H1 (cell line): ENCODE measurements at regions of chr2 and their contacts with region 1.

Region 1: DNA sequence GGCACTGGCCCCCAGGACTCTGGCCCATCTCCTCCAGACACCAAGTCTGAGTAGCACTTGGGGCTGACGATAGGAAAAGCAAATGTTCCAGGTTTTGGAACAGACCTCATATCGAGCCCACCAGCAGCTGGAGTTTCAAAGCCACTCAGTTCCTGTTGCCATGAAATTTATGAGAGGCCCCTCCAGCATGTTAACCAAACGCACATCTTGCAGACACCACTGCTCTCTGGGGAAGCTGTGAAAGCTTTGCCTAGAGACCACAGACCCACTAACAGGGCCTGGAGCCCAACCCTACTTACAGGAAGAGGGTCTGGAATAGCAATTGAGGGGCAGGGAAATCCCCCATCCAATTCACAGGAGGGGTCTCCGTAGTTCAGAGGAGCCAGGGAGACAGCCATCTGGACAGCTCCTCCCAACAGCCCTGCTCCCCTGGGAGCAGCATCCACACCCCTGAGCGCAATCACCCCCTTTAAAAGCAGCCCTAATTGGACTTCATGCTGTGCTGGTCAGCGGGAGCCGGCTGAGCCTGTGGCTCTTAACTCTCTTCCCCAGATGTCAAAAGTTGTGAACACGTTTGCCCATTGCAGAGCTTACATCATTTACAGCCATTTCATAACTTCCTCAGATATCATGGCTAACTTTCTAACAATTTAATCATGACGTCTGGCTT is 81.3 kb downstream of the TGFA start:
- DNase-seq: no peak
- H3K4me3 ChIP-seq: no peak overlapping the region
- H3K27ac ChIP-seq: no peak overlapping the region
- H3K4me1 ChIP-seq: peaks cover 0 to 4% (median 0%) of the 10 kb centered on the region in 4 experiments; a peak in 2 of 7 replicates
- H3K27me3 ChIP-seq: peaks cover 0 to 3% (median 0%) of the 10 kb centered on the region in 4 experiments; a peak in 1 of 7 replicates
- CTCF ChIP-seq: no peak
- EP300 ChIP-seq: no peak
- POLR2A ChIP-seq: no peak
- RAD21 ChIP-seq: no peak

Region 2: DNA sequence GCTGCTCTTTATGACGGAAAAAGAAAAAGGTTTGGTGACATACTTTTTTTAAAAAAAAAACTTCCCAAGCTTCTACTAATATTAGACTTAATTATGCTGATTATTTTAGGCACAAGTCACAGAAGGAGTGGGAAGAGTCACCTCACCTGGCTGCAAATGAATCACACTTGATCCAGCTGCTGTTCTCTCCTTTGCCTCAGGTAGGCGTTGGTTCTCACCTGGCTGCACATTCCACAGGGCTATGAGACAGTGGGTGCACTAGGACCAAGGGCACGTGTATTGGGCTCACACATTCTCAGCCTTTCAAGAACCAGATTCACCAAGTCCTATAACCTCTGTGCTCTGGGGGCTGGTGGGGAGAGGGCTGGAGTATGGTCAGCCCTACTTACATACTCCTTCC is 12.0 kb before region 1 on chr2:
- CTCF ChIA-PET with region 1: interaction called, 21 read pairs
- POLR2A ChIA-PET with region 1: no interaction called
- DNase-seq: no peak
- H3K4me3 ChIP-seq: no peak overlapping the region
- H3K27ac ChIP-seq: no peak overlapping the region
- H3K4me1 ChIP-seq: peaks cover 0 to 10% (median 4%) of the 10 kb centered on the region in 4 experiments; a peak in 5 of 7 replicates
- H3K27me3 ChIP-seq: no peaks in the 10 kb centered on the region
- CTCF ChIP-seq: peak; percentile 66 to 84 (median 75)
- EP300 ChIP-seq: no peak
- POLR2A ChIP-seq: no peak
- RAD21 ChIP-seq: peak; percentile 50 to 70

Region 3: GRCh38 chr2:70570041-70570663 is 97.8 kb after region 1 on chr2:
- CTCF ChIA-PET with region 1: no interaction called
- POLR2A ChIA-PET with region 1: no interaction called
- DNase-seq: no peak
- H3K4me3 ChIP-seq: no peak overlapping the region
- H3K27ac ChIP-seq: no peak overlapping the region
- H3K4me1 ChIP-seq: peaks cover 0 to 2% (median 0%) of the 10 kb centered on the region in 4 experiments; a peak in 2 of 7 replicates
- H3K27me3 ChIP-seq: peaks cover 0 to 6% (median 3%) of the 10 kb centered on the region in 4 experiments; a peak in 3 of 7 replicates
- CTCF ChIP-seq: no peak
- EP300 ChIP-seq: no peak
- POLR2A ChIP-seq: no peak
- RAD21 ChIP-seq: no peak